ENCODE measurements at regions of chr17 and their contacts with region 1.

Region 1: DNA sequence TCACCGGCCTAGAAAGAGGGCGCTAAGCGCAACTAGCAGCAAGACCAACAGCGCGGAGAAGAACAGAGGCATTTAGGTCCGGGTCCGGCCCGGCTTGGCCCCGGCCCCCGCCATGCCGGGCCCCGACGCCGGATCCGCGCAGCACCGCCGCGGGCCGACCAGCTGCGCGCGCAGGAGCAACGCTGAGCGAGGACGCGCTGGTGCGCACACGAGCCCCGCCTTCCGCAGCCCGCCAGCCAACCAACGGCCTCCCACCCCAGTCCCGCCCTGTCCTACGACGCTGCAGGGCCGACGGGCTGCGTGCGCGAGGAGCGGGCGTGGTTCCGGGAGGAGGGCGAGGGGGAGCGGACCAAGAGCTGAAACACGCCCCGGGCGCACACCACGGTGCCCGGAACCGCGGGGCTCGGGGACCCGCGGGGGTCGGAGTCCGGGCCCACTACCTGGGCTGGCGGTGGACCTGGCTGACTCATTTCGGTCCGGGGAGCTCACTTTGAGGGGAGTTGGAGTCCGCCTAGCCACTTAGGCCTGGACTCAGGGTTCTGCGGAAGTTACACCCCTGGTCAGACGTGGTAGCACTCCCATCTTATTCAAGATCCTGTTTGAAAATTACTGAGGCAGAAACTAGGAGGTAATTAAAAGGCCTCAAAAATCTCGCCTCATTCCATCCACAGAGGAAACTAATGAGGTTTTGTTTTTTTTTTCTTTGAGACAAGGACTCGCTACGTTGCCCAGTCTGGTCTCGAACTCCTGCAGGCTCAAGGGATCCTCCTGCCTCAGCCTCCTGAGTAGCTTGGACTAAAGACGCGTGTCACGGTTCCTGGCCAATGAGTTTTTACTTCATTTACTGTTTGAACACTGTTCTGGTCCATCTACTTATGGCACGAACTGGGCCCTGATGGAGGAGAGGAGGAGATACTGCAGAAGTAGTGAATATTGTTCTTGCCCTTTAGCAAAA is at the start of gene BLTP2:
- DNase-seq: peak; percentile 92

Region 2: DNA sequence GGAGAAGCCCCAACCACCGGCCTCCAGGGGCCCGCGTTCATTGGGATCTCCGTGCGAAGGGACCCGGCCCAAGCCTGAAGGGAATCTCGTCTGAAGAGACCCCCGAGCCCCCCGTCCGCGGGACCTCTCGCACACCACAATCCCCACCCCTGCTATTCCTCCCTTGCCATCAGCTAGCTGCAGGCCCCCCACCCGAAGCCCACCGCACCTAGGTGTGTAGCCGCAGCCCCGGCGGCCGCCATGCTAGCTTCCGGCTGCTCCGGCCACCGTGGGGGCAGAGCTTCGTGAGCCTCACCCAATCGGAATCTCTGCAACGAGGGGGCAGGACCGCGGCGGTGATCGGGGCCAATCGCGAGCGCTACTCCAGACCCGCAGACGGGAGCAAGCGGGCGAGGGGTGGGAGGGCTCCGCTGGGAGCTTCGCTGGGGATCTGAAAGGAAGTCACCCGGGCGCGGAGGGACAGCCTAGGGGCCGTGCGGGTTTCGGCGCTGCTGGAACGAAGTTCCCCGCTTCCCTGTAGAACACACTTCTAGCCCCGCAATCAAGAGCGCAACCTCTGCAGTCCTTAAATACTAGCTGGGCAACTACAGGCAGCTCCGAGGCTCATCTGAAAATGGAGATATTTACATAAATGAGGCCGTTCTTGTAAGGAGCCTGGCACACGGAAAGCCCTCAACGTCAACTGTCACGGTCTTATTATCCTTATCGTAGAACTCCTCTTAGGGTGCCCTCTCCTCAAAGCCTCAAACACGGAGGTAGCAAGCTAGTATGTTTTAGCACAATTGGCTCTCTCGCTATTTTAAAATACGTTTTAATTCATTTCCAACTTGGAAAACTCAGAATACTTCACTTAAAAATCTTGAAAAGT is 73.8 kb before region 1 on chr17 and contains the start of gene PIGS:
- CTCF ChIA-PET with region 1: interaction called, 5 read pairs
- POLR2A ChIA-PET with region 1: interaction called, 15 read pairs
- DNase-seq: peak; percentile 88

Region 3: GRCh38 chr17:28634206-28634856 is 10.9 kb before region 1 on chr17:
- CTCF ChIA-PET with region 1: interaction called, 7 read pairs
- POLR2A ChIA-PET with region 1: interaction called, 32 read pairs
- DNase-seq: no peak

Region 4: GRCh38 chr17:28661635-28662537 is 16.6 kb after region 1 on chr17 and contains the starts of genes SDF2 and SUPT6H:
- CTCF ChIA-PET with region 1: interaction called, 8 read pairs
- POLR2A ChIA-PET with region 1: interaction called, 94 read pairs
- DNase-seq: peak; percentile 89

Region 5: DNA sequence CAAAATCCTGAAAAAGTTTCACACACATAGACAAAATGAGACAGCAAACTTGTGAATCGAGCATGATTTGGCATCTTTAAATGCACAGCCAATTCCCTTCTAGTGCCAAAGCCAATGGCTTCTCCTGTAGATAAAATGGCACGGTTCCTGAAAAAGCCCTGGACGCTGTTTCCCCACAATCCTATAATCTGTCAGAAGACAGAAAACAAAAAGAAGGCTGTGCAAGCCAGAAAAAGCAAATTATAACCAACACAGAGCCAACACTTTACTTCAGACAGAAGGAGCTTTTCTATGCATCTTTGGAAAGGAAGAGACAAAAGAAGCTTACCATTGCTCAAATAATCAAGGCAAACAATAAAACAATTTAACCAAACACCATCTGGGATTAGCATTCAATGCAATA is 173.6 kb after region 1 on chr17:
- CTCF ChIA-PET with region 1: no interaction called
- POLR2A ChIA-PET with region 1: no interaction called
- DNase-seq: no peak

Measured in HEK293T (cell line).